ENCODE measurements at regions of chr10 and their contacts with region 1.

Region 1: GRCh38 chr10:14385596-14386593 is 55.2 kb upstream of the FRMD4A start:
- DNase-seq: no peak
- H3K4me3 ChIP-seq: no peak overlapping the region
- H3K27ac ChIP-seq: peak overlapping the region in 1 of 59 donors; percentile 36
- H3K27me3 ChIP-seq: no peaks in the 10 kb centered on the region
- CTCF ChIP-seq: peak in 48 of 56 donors; percentile 7 to 63 (median 36)

Region 2: DNA sequence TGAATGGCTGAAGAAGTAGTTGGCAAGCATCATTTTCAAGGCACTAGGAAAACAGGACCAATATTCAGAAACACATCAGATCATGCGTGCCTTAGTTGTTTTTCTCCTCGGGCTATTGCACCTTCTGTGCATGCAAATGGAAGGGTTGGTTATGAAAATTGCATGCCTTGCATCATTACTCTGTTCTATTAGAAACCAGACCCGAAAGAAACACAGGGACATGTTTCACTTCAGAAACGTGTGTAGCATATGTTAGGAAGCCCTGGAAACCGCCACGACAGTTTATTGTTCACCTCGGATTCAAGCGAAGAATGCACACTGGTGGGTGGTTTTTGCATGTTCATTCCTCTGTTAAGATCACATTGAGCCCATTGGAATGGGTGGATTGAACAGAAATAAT is 269.9 kb before region 1 on chr10:
- intact Hi-C with region 1: no loop called
- DNase-seq: no peak
- H3K4me3 ChIP-seq: no peak overlapping the region
- H3K27ac ChIP-seq: no peak overlapping the region
- H3K27me3 ChIP-seq: no peaks in the 10 kb centered on the region
- CTCF ChIP-seq: no peak

Region 3: GRCh38 chr10:14822879-14823755 is 437.2 kb after region 1 on chr10:
- intact Hi-C with region 1: loop called in 1 of 2 experiments (anchors 10 kb)
- DNase-seq: peak in 3 of 10 donors; percentile 35 to 55 (median 46)
- H3K4me3 ChIP-seq: no peak overlapping the region
- H3K27ac ChIP-seq: no peak overlapping the region
- H3K27me3 ChIP-seq: no peaks in the 10 kb centered on the region
- CTCF ChIP-seq: peak; percentile 34 to 82 (median 66)

Measured in dorsolateral prefrontal cortex (tissue), 120 donors.